ENCODE measurements at regions of chr6 and their contacts with region 1.

Region 1: GRCh38 chr6:43075670-43076463 is at the start of gene PTK7:
- DNase-seq: peak; percentile 47
- H3K4me3 ChIP-seq: peak within 1 kb of the TSS; percentile 92 to 94 (median 94)
- H3K27ac ChIP-seq: peak within 1 kb of the TSS; percentile 75
- H3K4me1 ChIP-seq: peaks cover 17% of the 10 kb centered on the region
- H3K27me3 ChIP-seq: no peaks in the 10 kb centered on the region
- CTCF ChIP-seq: no peak
- total RNA-seq, gene PTK7: 141 to 277 TPM

Region 2: GRCh38 chr6:42873313-42873712 is 202.6 kb before region 1 on chr6:
- CTCF ChIA-PET with region 1: no interaction called
- dilution Hi-C with region 1: no loop called
- in situ Hi-C with region 1: no loop called
- intact Hi-C with region 1: no loop called
- DNase-seq: no peak
- H3K4me3 ChIP-seq: no peak overlapping the region
- H3K27ac ChIP-seq: no peak overlapping the region
- H3K4me1 ChIP-seq: no peaks in the 10 kb centered on the region
- H3K27me3 ChIP-seq: no peaks in the 10 kb centered on the region
- CTCF ChIP-seq: no peak

Region 3: GRCh38 chr6:43009124-43009523 is 66.7 kb before region 1 on chr6:
- CTCF ChIA-PET with region 1: no interaction called
- dilution Hi-C with region 1: no loop called
- in situ Hi-C with region 1: no loop called
- intact Hi-C with region 1: no loop called
- DNase-seq: no peak
- H3K4me3 ChIP-seq: no peak overlapping the region
- H3K27ac ChIP-seq: no peak overlapping the region
- H3K4me1 ChIP-seq: peaks cover 18% of the 10 kb centered on the region
- H3K27me3 ChIP-seq: no peaks in the 10 kb centered on the region
- CTCF ChIP-seq: peak; percentile 41 to 48

Region 4: DNA sequence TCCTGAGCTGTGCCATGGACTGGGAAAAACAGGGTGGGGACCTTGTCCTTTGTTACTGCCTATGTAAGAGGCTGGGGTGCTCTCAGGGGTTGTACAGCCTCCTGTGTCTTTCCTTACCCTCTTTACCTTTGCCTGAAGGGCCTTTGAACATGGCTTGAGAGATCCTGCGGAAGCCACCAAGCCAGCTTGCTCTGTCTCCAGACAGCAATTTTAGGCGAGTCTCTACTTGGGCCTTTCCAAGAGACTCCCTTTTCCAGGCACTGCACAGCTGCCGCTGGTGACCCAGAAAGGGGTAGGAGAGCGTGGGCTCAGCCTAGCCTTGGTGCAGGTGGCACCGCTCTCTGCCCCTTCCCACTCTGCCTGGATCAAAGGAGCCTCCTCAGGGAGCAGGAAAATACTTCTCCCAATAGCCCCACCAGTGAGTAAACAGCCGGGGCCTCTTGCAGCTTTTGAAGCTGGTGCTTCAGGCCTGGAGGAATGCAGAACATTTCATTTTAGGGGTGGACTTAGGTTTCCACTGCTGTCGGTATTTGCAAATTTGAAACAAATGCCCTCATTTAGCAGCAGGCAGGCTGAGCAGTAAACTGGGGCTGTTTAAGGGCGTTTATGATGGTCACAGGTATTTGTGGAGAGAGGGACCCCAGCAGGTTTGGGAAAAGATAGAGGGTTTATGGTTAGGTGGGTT is 14.1 kb after region 1 on chr6:
- CTCF ChIA-PET with region 1: interaction called, 4 read pairs
- dilution Hi-C with region 1: no loop called
- in situ Hi-C with region 1: no loop called
- intact Hi-C with region 1: loop called (anchors 1 kb)
- DNase-seq: no peak
- H3K4me3 ChIP-seq: no peak overlapping the region
- H3K27ac ChIP-seq: peak overlapping the region; percentile 74
- H3K4me1 ChIP-seq: peaks cover 63% of the 10 kb centered on the region
- H3K27me3 ChIP-seq: no peaks in the 10 kb centered on the region
- CTCF ChIP-seq: no peak

Region 5: DNA sequence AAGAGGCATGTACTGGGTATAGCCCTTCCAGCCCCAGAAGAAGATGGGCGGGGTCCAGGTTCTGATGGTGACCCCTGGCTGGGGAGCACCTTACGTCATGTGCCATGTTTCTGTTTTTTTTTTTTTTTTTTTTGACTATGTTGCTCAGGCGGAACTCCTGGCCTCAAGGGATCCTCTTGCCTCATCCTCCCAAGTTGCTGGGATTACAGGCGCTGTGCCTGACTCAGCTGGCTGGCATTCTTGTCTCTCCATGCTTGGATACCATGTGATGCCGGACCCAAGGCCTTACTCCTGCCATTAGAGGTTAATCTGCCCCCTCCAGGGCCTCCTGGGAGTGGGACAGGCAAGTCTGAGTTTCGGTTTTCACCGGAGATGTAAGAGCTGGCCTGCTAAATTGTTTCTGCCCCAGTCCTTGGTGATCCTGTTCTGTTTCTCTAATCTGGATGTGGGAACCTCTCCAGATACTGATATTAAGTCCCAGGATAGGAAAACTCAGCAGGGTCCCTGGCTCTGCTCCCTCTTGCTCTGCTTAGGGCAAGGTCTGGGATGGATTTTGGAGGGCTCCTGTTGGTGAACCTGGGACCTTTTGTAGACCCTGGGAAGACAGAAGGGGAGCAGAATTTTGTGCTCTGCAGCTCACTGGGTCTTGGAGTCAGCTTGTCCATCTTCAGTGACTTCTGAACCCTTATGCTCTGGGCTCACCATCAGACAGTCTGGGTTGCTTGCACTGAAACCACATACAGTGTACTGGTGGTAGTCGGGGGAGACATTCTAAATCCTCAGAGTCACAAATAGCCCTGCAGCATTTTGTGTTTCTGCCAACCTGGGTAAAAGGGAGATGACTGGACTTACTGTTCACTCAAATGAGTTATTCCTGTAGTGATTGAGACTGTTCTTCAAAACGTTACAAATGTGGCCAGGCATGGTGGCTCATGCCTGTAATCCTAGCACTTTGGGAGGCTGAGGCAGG is 45.4 kb after region 1 on chr6:
- CTCF ChIA-PET with region 1: no interaction called
- dilution Hi-C with region 1: no loop called
- in situ Hi-C with region 1: loop called (anchors 5 kb)
- intact Hi-C with region 1: no loop called
- DNase-seq: peak; percentile 93
- H3K4me3 ChIP-seq: no peak overlapping the region
- H3K27ac ChIP-seq: peak overlapping the region; percentile 95
- H3K4me1 ChIP-seq: peaks cover 56% of the 10 kb centered on the region
- H3K27me3 ChIP-seq: no peaks in the 10 kb centered on the region
- CTCF ChIP-seq: peak in 1 of 2 donors; percentile 16

Region 6: GRCh38 chr6:43129434-43130194 is 53.7 kb after region 1 on chr6:
- CTCF ChIA-PET with region 1: no interaction called
- dilution Hi-C with region 1: no loop called
- in situ Hi-C with region 1: loop called (anchors 5 kb)
- intact Hi-C with region 1: no loop called
- DNase-seq: peak; percentile 46
- H3K4me3 ChIP-seq: no peak overlapping the region
- H3K27ac ChIP-seq: no peak overlapping the region
- H3K4me1 ChIP-seq: peaks cover 30% of the 10 kb centered on the region
- H3K27me3 ChIP-seq: no peaks in the 10 kb centered on the region
- CTCF ChIP-seq: peak; percentile 49 to 78

Region 7: GRCh38 chr6:43468748-43469681 is 393.1 kb after region 1 on chr6:
- CTCF ChIA-PET with region 1: no interaction called
- dilution Hi-C with region 1: no loop called
- in situ Hi-C with region 1: no loop called
- intact Hi-C with region 1: no loop called
- DNase-seq: no peak
- H3K4me3 ChIP-seq: no peak overlapping the region
- H3K27ac ChIP-seq: no peak overlapping the region
- H3K4me1 ChIP-seq: peaks cover 33% of the 10 kb centered on the region
- H3K27me3 ChIP-seq: no peaks in the 10 kb centered on the region
- CTCF ChIP-seq: no peak